Left cardiac atrium (tissue), 4 donors: ENCODE measurements at regions of chr17 and their contacts with region 1.

Region 1: GRCh38 chr17:49548506-49549310 is 27.0 kb upstream of the NXPH3 start:
- DNase-seq: no peak
- ATAC-seq: peak; percentile 51 to 75

Region 2: DNA sequence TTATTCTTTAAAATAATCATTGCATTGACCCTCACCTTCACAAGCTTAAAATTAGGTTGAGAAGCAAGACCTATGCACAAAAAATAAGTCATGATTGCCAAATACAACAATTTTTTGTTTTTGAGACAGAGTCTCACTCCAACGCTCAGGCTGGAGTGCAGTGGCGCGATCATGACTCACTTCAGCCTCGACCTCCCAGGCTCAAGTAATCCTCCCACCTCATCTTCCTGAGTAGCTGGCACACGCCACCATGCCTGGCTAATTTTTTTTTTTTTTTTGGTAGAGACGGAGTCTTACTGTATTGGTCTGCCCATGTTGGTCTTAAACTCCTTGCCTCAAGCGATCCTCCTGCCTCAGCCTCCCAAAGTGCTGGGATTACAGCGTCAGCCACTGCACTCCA is 210.8 kb before region 1 on chr17:
- intact Hi-C with region 1: no loop called
- DNase-seq: peak; percentile 29
- ATAC-seq: peak in 1 of 2 donors; percentile 80

Region 3: DNA sequence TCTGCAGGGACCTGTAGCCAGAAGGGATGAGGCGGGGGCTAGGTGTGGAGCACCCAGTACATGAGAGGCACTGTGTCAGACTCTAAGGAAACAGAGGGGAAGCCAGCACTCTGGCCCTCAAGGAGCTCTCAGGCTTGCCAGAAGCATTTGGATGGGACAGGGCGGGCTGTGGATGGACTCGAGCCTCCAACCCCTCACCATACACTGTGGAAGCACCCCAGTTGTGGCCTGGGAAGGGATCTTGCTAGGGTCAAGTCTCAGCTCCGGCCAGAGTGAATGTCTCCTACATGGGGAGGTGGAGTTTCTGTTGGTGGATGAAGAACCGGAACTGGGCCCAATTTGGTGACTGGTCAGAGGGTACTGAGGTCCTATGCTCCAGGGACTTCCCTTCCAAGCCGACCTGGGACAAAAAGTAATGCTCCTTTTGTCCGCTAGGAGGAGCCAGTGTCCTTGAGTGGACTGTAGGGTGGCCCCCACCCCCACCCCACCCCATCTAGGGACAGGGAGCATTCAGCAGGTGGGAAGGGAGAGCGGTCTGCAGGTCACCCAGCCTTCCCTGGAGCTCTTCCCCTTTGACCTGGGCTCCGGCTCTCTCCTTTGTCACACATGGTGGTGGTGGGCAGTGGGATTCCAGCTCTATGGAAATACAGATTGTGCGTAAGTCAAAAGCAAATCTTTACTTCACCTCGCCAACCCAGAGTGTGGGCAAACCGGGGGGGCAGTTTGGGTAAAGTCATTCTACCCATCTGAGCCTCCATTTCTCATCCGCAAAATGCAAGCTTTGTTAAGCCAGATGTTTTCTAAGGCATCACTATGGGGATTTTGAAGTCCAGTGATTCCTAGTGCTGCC is 113.7 kb before region 1 on chr17:
- intact Hi-C with region 1: loop called in 1 of 2 experiments (anchors 5 kb)
- DNase-seq: peak; percentile 50
- ATAC-seq: peak; percentile 51 to 65